Activated CD8-positive, alpha-beta memory T cell treated with anti-CD3 and anti-CD28 coated beads, Interleukin-2, amount 10 ng/mL, durations not matched to agents 7 days and 5 days (primary cell): ENCODE measurements at regions of chr19 and their contacts with region 1.

Region 1: DNA sequence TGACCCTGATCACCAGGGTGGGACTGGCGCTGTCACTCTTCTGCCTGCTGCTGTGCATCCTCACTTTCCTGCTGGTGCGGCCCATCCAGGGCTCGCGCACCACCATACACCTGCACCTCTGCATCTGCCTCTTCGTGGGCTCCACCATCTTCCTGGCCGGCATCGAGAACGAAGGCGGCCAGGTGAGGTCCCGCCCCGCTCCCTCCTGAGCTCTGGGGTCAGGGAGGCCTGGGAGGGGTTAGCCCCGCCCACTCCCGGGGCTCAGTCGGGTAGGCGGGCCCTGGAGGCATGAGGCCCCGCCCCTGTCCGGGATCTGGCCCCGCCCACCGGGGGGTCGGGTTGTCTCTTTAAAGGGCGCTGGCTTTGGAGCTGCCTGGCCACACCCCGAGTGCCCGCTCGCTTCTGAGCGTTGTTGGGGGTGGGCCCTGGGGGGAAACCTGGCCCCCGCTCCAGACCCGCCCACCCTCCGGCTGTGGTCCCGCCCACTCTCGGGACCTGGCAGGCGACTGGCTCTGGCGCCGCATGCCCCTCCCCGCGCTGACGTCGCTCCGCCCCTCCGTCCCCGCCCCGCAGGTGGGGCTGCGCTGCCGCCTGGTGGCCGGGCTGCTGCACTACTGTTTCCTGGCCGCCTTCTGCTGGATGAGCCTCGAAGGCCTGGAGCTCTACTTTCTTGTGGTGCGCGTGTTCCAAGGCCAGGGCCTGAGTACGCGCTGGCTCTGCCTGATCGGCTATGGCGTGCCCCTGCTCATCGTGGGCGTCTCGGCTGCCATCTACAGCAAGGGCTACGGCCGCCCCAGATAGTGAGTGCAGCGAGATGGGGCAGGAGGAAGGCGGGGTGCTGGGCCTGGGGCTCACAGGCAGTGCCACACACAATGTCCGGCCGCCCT is 13.1 kb downstream of the DDX39A start:
- DNase-seq: peak; percentile 94
- ATAC-seq: peak; percentile 80
- H3K4me3 Mint-ChIP-seq: no peak overlapping the region
- H3K27ac Mint-ChIP-seq: peak overlapping the region; percentile 52
- H3K4me1 Mint-ChIP-seq: peaks cover 38% of the 10 kb centered on the region
- H3K27me3 Mint-ChIP-seq: no peaks in the 10 kb centered on the region

Region 2: DNA sequence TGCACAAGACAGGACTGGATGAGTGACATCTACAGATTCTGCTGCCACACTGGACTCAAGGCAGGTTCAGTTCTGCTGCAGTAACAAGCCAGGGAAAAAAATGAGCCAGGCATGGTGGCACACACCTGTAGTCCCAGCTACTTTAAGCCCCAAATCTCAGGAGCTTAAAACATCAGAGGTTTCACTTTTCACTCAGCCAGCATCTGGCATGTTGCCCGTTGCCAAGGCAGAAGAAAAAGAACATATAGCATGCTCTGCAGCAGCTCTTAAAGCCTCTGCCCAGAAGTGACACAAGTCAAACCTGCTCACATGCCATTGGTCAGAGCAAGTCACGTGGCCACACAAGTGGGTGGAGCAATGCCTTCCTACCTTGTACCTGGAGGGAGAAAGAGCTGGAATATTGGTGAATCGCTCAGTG is 39.5 kb before region 1 on chr19:
- CTCF ChIA-PET with region 1: interaction called, 211 read pairs
- DNase-seq: peak; percentile 93
- ATAC-seq: peak; percentile 37
- H3K4me3 Mint-ChIP-seq: peak overlapping the region; percentile 12
- H3K27ac Mint-ChIP-seq: peak overlapping the region; percentile 89
- H3K4me1 Mint-ChIP-seq: peaks cover 74% of the 10 kb centered on the region
- H3K27me3 Mint-ChIP-seq: no peaks in the 10 kb centered on the region

Region 3: DNA sequence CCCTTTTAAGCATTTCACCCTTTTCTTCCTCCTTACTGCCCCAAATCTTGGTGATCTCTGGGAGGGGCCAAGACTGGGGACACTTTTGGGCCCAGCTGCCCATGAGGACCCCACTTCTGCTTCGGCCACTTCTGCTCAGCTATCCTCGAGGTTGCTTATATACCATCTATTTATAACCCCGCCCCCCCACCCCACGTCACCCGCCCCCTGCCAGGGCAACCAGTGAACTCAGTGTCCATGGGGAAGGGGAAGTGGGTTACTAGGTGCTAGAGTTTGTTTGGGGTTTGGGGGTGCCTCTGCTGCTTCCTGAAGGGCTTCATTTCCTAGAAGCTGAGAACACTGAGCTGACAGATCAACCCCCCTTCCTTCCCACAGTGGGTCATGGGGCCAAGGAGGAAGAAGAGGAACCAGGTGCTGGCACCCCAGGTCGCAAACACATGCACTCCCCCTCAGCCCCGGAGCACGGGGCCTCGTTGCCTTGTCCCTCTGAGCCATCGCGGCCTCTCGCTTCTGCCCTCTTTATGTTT is 30.9 kb before region 1 on chr19:
- CTCF ChIA-PET with region 1: interaction called, 40 read pairs
- DNase-seq: peak; percentile 95
- ATAC-seq: peak; percentile 82
- H3K4me3 Mint-ChIP-seq: peak overlapping the region; percentile 46
- H3K27ac Mint-ChIP-seq: peak overlapping the region; percentile 97
- H3K4me1 Mint-ChIP-seq: peaks cover 67% of the 10 kb centered on the region
- H3K27me3 Mint-ChIP-seq: no peaks in the 10 kb centered on the region

Region 4: DNA sequence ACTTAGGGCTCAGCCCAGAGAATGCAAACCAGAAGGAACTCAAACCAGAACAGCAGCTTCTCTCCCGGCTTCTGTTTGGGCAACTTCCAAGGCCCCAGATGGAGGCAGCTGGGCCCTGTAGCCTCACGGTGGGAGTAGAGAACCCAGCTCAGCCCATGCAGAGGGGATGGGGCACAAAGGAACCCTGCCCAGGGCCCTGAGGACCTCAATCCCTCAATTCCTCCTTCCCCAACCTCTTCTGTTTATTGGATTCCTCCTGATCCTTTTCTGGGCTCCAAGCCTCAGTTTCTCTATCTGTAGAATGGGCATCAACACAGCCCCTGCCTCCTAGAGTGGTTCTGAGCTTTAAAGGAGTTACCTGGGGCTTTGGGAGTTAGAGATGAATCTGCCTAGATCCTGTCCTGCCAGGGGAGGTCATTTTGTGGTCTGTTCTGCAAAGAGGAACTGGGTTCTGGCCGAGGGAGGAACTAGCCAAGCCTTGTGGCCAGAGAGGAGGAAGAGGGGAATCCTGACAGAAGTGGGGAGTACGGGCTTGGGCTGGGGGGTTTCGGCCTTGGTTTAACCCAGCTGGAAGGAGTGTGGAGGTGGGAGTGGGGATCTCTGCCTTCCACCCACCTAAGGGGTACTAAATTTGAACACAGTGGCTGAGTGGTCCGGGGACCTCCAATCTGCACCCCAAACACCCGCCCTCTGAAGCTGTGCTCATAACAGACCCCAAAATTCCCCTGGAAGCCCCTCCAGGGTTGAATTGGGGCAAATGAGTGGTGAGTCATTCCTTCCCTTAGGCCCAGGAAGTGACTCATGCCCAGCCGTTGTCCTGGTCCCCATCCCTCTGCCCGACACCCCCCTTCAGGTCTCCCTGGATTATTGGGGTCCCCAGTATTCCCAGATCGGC is 22.1 kb before region 1 on chr19:
- CTCF ChIA-PET with region 1: interaction called, 40 read pairs
- DNase-seq: peak; percentile 83
- ATAC-seq: peak; percentile 25
- H3K4me3 Mint-ChIP-seq: peak overlapping the region; percentile 98
- H3K27ac Mint-ChIP-seq: peak overlapping the region; percentile 97
- H3K4me1 Mint-ChIP-seq: peaks cover 38% of the 10 kb centered on the region
- H3K27me3 Mint-ChIP-seq: no peaks in the 10 kb centered on the region

Region 5: DNA sequence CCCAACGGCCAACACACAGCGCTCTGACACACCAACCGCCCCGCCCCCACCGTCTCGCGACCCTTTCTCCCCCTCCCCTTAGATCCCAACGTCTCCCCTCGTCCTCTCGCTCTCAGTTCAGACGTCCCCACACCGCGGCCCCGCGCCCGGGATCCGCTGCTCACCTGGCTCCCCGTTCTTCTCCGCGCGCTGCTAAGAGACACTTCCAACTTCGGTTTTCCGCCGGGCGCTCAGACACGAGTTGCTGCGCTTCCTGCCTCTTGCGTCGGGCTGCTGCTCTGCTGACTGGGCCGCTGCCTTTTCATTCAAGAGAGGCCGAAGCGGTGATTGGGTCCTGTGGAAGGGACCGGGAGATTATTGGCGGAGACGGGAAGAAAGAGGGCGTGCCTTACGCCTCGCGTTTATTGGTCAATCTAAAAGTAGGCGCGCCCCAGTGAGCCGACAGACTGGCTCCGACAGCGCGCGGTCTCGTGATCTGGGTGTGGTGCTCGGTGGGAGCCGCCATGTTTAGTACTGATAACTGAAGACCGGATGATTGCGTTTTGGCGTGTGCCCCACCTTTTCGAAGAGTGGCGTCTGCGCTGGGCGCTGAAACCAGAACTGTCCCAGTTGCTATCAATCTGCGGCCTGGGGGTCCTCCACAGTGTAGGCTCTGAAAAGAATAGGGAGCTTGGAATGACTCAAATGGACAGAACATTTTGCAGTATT is 13.3 kb after region 1 on chr19 and contains the start of gene DDX39A:
- CTCF ChIA-PET with region 1: interaction called, 23 read pairs
- DNase-seq: peak; percentile 99
- ATAC-seq: peak; percentile 93
- H3K4me3 Mint-ChIP-seq: peak within 1 kb of the TSS; percentile 86
- H3K27ac Mint-ChIP-seq: peak within 1 kb of the TSS; percentile 94
- H3K4me1 Mint-ChIP-seq: peaks cover 33% of the 10 kb centered on the region
- H3K27me3 Mint-ChIP-seq: no peaks in the 10 kb centered on the region
- total RNA-seq, gene DDX39A: 273 to 311 TPM

Region 6: DNA sequence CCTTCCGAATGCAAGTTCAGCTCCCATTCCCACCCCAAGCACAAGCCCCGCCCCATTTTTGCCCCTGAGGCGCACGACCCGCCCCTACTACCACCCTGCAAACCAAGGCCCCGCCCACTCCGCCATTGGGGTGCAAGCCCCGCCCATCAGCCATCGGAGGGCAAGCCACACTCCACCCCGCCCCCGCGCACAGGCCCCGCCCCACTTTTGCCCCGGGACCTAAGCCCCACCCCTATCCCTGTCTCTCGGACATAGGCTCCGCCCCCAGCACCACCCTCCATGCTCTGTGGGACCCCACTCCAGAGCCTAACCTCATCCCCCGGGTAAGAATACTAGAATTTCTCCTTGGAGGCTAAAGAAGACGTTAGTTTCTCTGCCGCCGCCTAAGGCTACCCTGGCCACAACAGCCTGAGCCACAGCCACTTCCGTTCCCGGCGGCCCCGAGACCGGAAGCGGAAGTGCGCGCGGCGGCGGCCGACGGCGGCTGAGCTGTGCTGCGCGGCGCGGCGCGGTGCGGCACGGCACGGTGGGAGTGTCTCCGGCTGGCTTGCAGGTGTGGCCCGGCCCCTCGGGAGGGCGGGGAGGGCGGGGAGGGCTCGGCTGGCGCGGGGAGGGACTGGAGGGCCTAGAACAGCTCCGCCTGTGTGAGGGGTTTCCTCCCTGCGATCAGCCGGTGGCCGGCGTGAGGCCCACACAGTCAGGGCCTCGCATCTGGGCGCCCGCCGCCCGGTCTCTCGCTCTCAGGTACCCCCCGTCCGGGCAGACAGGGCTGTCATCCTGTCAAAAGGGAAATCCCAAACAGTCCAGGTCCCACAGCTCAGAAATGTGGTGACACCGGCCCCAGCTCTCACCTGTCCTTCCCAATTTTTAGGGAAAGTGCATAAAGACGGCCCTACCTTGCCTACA is 283.9 kb after region 1 on chr19 and contains the start of gene ZNF333:
- CTCF ChIA-PET with region 1: no interaction called
- DNase-seq: peak; percentile 100
- ATAC-seq: peak; percentile 95
- H3K4me3 Mint-ChIP-seq: peak within 1 kb of the TSS; percentile 87
- H3K27ac Mint-ChIP-seq: peak within 1 kb of the TSS; percentile 100
- H3K4me1 Mint-ChIP-seq: peaks cover 12% of the 10 kb centered on the region
- H3K27me3 Mint-ChIP-seq: no peaks in the 10 kb centered on the region
- total RNA-seq, gene ZNF333: 8.5 to 11.1 TPM